A549 (cell line): ENCODE measurements at regions of chr1 and their contacts with region 1.

Region 1: GRCh38 chr1:214476958-214477870 is 74.2 kb downstream of the PTPN14 start:
- DNase-seq: no peak
- ATAC-seq: peak in 1 of 2 experiments; percentile 33; a peak in 2 of 6 replicates
- H3K4me3 ChIP-seq: no peak overlapping the region
- H3K27ac ChIP-seq: peak overlapping the region in 1 of 2 experiments; percentile 52; a peak in 3 of 6 replicates
- H3K4me1 ChIP-seq: peaks cover 66% of the 10 kb centered on the region
- CTCF ChIP-seq: no peak
- EP300 ChIP-seq: no peak
- POLR2A ChIP-seq: no peak
- RAD21 ChIP-seq: no peak

Region 2: DNA sequence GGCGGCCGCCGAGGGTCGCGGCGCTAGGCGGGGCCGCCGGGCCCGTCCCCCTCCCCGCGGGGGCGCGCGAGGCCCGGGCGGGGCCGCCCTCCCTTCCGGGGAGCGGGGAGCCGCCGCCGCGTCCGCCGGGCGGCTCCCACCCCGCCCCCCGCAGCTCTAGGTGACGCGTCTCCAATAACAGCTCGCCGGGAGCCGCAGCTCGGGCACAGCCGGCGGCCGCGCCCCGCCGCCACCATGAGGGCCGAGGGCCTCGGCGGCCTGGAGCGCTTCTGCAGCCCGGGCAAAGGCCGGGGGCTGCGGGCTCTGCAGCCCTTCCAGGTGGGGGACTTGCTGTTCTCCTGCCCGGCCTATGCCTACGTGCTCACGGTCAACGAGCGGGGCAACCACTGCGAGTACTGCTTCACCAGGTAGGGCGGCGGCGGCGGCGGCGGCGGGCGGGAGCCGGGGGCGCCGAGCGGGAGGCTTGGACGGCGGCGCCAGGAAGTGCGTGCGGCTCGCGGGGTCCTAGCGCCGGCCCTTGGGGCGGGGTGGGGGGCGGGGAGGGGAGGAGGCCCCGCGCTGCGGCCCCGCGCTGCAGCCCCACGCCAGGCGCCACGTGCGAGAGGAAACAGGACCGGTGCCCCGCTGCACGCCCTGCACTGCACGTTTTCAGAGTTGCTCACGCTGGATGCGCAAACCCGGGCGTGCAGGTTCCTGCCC is 196.0 kb before region 1 on chr1 and contains the start of gene SMYD2:
- CTCF ChIA-PET with region 1: no interaction called
- POLR2A ChIA-PET with region 1: no interaction called
- DNase-seq: peak; percentile 53 to 66
- ATAC-seq: peak; percentile 83 to 86
- H3K4me3 ChIP-seq: peak within 1 kb of the TSS; percentile 90
- H3K27ac ChIP-seq: peak within 1 kb of the TSS; percentile 98 to 99
- H3K4me1 ChIP-seq: peaks cover 22% of the 10 kb centered on the region
- CTCF ChIP-seq: no peak
- EP300 ChIP-seq: no peak
- POLR2A ChIP-seq: peak; percentile 36
- RAD21 ChIP-seq: no peak
- polyA plus RNA-seq, gene SMYD2: 54.9 and 57.7 TPM in 2 replicates

Region 3: GRCh38 chr1:214427871-214428277 is 49.3 kb before region 1 on chr1:
- CTCF ChIA-PET with region 1: no interaction called
- POLR2A ChIA-PET with region 1: no interaction called
- DNase-seq: peak in 1 of 2 experiments; percentile 49
- ATAC-seq: peak; percentile 43 to 80; a peak in 5 of 6 replicates
- H3K4me3 ChIP-seq: no peak overlapping the region
- H3K27ac ChIP-seq: peak overlapping the region in 1 of 2 experiments; percentile 48; a peak in 3 of 6 replicates
- H3K4me1 ChIP-seq: peaks cover 4% of the 10 kb centered on the region; the same call in 2 of the 3 replicates
- CTCF ChIP-seq: no peak
- EP300 ChIP-seq: no peak
- POLR2A ChIP-seq: no peak
- RAD21 ChIP-seq: no peak

Region 4: GRCh38 chr1:214494706-214495105 is 17.5 kb after region 1 on chr1:
- CTCF ChIA-PET with region 1: interaction called, 27 read pairs
- POLR2A ChIA-PET with region 1: no interaction called
- DNase-seq: peak in 1 of 2 experiments; percentile 39
- ATAC-seq: peak; percentile 19 to 67; a peak in 4 of 6 replicates
- H3K4me3 ChIP-seq: no peak overlapping the region
- H3K27ac ChIP-seq: peak overlapping the region in 1 of 2 experiments; percentile 50; a peak in 2 of 6 replicates
- H3K4me1 ChIP-seq: peaks cover 22% of the 10 kb centered on the region
- CTCF ChIP-seq: no peak
- EP300 ChIP-seq: no peak
- POLR2A ChIP-seq: no peak
- RAD21 ChIP-seq: no peak